Psoas muscle (tissue), 8 donors: ENCODE measurements at regions of chr3 and their contacts with region 1.

Region 1: DNA sequence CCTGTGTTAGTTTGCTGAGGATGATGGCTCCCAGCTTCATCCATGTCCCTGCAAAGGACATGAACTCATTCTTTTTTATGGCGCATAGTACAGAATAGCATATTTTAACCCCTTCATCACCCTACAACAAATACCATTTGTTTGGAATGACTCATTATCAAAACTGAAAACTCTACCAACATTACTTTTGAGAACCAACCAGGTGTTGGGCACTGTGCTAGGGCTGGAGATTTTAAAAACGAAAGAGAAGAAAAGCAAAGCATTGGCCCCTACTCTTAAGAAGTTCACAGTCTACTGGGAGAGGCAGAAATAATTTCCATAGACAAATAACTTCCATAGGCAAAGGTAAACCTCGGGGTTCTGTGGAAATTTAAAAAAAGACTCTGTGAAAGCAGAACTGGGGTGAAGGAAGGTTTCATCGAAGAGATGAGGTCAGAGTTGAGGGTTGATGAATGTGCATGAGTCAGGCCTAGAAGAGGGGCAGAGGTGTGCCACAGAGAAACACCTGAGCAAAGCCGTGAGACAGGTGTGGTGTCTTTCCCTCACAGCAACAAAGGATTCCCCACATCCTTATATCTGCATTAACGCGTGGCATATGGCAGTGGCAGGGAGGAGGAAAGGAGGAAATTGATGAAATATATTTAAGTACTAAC is 51.0 kb downstream of the MCF2L2 start:
- DNase-seq: no peak
- ATAC-seq: no peak
- H3K4me3 ChIP-seq: no peak overlapping the region
- H3K27ac ChIP-seq: no peak overlapping the region
- H3K4me1 ChIP-seq: no peaks in the 10 kb centered on the region
- H3K27me3 ChIP-seq: no peaks in the 10 kb centered on the region
- CTCF ChIP-seq: no peak

Region 2: GRCh38 chr3:183188895-183189462 is 188.5 kb before region 1 on chr3:
- intact Hi-C with region 1: loop called in 1 of 2 experiments (anchors 2 kb)
- DNase-seq: peak; percentile 38 to 56
- ATAC-seq: peak in 3 of 4 donors; percentile 52 to 62 (median 54)
- H3K4me3 ChIP-seq: no peak overlapping the region
- H3K27ac ChIP-seq: no peak overlapping the region
- H3K4me1 ChIP-seq: no peaks in the 10 kb centered on the region
- H3K27me3 ChIP-seq: no peaks in the 10 kb centered on the region
- CTCF ChIP-seq: peak; percentile 21

Region 3: DNA sequence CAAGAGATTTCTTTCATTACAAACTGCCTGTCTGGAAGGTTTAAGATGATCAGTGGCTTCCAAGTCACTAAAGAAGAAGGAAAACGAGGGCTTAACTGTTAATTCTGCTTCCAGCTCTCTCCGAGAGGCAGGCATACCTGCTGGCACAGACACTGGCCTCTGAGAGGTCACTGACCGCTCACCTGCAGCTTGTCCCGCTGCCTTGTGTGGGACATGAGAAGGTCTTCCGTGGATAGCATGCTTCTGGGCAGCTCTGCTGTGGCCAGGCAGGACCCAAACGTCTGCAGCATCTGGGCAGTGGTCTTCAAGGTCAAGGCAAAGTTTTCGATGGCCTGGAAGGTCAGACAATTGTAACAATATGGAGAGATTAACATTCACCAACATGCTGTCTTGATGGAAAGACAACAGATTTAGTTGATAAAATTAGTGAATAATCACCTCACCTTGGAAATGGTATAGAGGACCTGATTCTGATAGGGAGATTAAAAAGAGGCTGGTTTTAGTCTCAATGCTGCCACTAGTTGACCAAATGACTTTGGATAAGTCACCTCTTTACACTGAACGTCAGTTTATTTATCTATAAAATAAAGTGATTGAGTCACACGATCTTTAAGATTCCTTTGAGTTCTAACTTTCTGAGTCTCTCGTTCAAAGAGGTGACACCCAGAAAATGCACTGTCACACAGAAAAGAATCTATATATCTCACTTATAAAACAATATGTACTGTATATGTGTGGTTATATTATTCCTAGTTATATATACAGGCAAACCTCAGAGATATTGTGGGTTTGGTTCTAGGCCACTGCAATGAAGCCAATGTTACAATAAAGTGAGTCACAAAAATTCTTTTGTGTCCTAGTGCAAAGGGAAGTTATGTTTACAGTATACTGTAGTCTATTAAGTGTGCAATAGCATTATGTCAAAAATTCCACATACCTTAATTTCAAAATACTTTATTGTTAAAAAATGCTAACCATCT is 59.3 kb before region 1 on chr3:
- intact Hi-C with region 1: loop called in 1 of 2 experiments (anchors 5 kb)
- DNase-seq: no peak
- ATAC-seq: no peak
- H3K4me3 ChIP-seq: no peak overlapping the region
- H3K27ac ChIP-seq: no peak overlapping the region
- H3K4me1 ChIP-seq: no peaks in the 10 kb centered on the region
- H3K27me3 ChIP-seq: no peaks in the 10 kb centered on the region
- CTCF ChIP-seq: no peak

Region 4: GRCh38 chr3:183349421-183350157 is 27.8 kb before region 1 on chr3:
- intact Hi-C with region 1: no loop called
- DNase-seq: no peak
- ATAC-seq: no peak
- H3K4me3 ChIP-seq: no peak overlapping the region
- H3K27ac ChIP-seq: no peak overlapping the region
- H3K4me1 ChIP-seq: no peaks in the 10 kb centered on the region
- H3K27me3 ChIP-seq: no peaks in the 10 kb centered on the region
- CTCF ChIP-seq: no peak

Region 5: GRCh38 chr3:183490670-183491069 is 113.2 kb after region 1 on chr3:
- intact Hi-C with region 1: no loop called
- DNase-seq: no peak
- ATAC-seq: no peak
- H3K4me3 ChIP-seq: no peak overlapping the region
- H3K27ac ChIP-seq: peak overlapping the region; percentile 87
- H3K4me1 ChIP-seq: peaks cover 27% of the 10 kb centered on the region
- H3K27me3 ChIP-seq: no peaks in the 10 kb centered on the region
- CTCF ChIP-seq: no peak